HAP-1 (cell line): ENCODE measurements at regions of chr13 and their contacts with region 1.

Region 1: GRCh38 chr13:78978381-78978998 is 319.5 kb upstream of the OBI1 start:
- DNase-seq: peak; percentile 56 to 70
- H3K4me3 ChIP-seq: no peak overlapping the region
- H3K4me1 ChIP-seq: no peaks in the 10 kb centered on the region
- H3K27me3 ChIP-seq: peaks cover 9% of the 10 kb centered on the region; the same call in 1 of the 2 replicates

Region 2: DNA sequence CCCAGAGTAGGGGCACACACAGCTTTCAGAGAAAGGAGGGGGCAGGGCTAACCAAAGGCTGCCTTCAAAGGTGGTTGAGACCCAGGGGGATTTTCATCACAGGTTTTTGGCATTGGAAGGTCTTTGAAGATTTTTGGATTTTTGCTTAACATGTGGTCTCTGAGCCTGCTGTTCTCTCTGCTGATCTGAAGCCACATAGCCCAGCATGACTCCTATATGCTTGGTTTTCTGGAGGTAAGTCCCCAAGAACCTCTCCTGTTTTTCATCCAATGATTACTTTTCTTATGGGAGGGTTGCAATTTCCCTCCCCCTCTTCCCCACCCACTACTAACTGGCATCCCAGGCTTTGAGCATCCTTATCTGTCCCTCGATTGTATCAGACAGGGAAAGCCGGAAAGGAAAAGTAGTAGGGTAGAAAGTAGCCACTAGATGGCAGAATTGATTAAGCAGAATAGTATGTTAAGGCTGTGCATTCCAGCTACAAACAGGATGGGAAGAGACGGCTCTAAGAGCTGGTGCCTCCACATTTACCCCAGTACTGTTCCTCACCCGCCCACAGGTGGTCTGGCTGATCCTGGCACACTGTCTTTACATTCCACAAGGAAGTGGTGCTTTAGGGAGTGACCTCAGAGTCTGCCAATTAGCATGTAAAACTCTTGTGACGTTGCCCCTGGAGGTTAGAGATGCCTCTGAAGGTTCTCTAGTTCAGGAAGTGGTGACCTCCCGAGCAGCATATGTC is 840.9 kb before region 1 on chr13:
- in situ Hi-C with region 1: loop called (anchors 25 kb)
- DNase-seq: peak; percentile 46 to 53
- H3K4me3 ChIP-seq: no peak overlapping the region
- H3K4me1 ChIP-seq: no peaks in the 10 kb centered on the region
- H3K27me3 ChIP-seq: no peaks in the 10 kb centered on the region